ENCODE measurements at regions of chr12 and their contacts with region 1.

Region 1: GRCh38 chr12:10227648-10228047 is 15.0 kb downstream of the GABARAPL1 start:
- DNase-seq: no peak
- H3K4me3 ChIP-seq: no peak overlapping the region
- H3K27ac ChIP-seq: no peak overlapping the region
- H3K4me1 ChIP-seq: no peaks in the 10 kb centered on the region
- H3K27me3 ChIP-seq: no peaks in the 10 kb centered on the region
- CTCF ChIP-seq: no peak
- EP300 ChIP-seq: no peak
- POLR2A ChIP-seq: no peak
- RAD21 ChIP-seq: no peak

Region 2: DNA sequence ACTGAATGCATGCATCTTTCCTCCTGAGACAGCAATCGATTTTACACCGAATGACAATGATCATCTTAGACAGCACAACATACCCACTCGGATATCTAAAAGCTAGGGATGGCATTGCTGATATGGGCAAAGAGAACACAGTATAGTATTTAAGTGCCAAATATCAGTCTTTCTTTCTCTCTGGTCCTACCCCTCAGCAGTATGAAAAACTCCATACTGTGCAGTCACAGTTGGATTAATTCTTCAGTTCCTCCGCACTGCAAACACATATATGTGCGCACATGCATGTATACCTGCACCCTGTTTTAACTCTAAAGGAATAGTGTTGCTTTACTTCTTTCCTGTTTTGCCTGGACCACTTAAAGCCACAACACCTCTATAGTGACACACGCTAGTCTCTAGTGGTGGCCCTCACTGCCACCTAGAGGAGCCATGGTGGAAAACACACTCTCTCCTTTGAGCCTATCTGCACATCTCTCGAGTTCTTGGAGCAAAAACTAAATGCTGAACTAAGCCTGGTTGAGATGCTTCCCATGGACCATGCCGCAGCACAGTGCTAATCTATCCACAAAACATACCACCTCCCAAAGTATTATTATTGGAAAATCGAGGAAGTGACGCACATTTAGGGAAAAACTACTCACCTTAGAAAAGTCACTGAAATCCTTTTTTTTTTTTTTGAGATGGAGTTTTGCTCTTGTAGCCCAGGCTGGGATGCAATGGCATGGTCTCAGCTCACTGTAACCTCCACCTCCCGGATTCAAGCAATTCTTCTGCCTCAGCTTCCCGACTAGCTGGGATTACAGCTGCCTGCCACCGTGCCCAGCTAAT is 36.9 kb before region 1 on chr12:
- CTCF ChIA-PET with region 1: no interaction called
- POLR2A ChIA-PET with region 1: no interaction called
- DNase-seq: peak in 1 of 2 experiments; percentile 53
- H3K4me3 ChIP-seq: no peak overlapping the region
- H3K27ac ChIP-seq: no peak overlapping the region
- H3K4me1 ChIP-seq: 0 out of 7 replicates have a peak, but pooled peaks cover 0 to 2% (median 0%) of the 10 kb centered on the region in 4 experiments
- H3K27me3 ChIP-seq: no peaks in the 10 kb centered on the region
- CTCF ChIP-seq: peak; percentile 50 to 83 (median 74)
- EP300 ChIP-seq: no peak
- POLR2A ChIP-seq: no peak
- RAD21 ChIP-seq: peak; percentile 77 to 80

Region 3: DNA sequence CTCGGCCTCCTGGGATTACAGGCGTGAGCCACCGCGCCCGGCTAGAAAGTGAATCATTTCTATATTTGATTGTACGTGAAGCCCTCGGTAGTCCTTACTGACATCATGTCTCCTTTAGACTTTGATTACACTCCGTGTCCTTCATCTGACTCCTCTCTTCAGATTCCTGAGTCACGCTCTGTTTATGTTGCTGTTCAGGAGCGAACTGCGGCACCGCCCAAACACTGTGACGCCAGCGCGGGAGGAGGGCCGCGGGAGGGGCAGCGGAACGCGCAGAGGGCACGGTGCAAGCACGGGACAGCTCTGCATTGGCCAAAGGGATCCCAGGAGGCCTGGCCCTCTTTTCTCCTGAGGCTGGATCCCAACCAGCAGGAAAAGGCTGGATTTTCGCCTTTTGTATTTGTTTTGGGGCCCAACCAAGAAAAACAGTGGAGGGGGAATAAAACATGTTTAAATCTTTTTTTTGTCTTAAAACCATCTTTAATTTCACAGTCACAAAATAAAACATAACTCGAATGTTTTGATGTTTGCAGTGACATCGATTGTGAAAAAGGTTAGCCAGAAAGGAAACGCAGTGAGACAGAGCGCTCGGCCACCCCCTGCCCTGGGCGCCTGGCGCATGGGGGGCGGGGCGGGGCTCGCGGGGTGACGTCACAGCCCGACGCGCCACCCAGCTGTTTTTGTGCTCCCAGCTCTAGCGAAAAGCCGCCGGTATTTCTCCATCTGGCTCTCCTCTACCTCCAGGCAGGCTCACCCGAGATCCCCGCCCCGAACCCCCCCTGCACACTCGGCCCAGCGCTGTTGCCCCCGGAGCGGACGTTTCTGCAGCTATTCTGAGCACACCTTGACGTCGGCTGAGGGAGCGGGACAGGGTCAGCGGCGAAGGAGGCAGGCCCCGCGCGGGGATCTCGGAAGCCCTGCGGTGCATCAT is 15.2 kb before region 1 on chr12 and contains the start of gene GABARAPL1:
- CTCF ChIA-PET with region 1: interaction called, 4 read pairs
- POLR2A ChIA-PET with region 1: interaction called, 13 read pairs
- DNase-seq: peak; percentile 72 to 85
- H3K4me3 ChIP-seq: peak within 1 kb of the TSS; percentile 66 to 97 (median 88)
- H3K27ac ChIP-seq: peak within 1 kb of the TSS; percentile 86
- H3K4me1 ChIP-seq: peaks cover 0 to 10% (median 3%) of the 10 kb centered on the region in 4 experiments; a peak in 5 of 7 replicates
- H3K27me3 ChIP-seq: no peaks in the 10 kb centered on the region
- CTCF ChIP-seq: no peak
- EP300 ChIP-seq: peak in 1 of 2 experiments; percentile 83; a peak in 1 of 3 replicates
- POLR2A ChIP-seq: peak; percentile 53 to 93
- RAD21 ChIP-seq: no peak
- total RNA-seq, gene GABARAPL1: 80.9 and 87.9 TPM in 2 replicates

Region 4: DNA sequence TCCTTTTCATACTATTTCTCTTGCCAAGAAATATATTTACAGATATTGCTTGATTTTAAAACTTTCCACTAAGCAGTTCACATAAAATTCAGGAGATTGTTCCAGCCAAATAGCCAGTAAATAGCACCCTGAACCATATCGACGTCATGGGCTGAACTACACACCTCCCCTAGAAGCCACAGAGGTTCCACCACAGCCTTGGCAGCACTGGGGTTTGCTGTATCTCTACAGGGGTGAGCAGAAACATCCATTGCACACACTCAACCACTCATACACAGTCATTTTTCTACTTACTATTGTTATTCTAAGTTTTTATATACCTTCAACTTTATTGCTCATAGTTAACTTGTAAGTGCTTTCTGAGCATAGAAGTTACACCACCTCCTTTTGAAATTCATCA is 270.0 kb after region 1 on chr12:
- CTCF ChIA-PET with region 1: no interaction called
- POLR2A ChIA-PET with region 1: no interaction called
- DNase-seq: no peak
- H3K4me3 ChIP-seq: no peak overlapping the region
- H3K27ac ChIP-seq: no peak overlapping the region
- H3K4me1 ChIP-seq: no peaks in the 10 kb centered on the region
- H3K27me3 ChIP-seq: no peaks in the 10 kb centered on the region
- CTCF ChIP-seq: no peak
- EP300 ChIP-seq: no peak
- POLR2A ChIP-seq: no peak
- RAD21 ChIP-seq: no peak